Testis (tissue), 5 donors: ENCODE measurements at regions of chr13 and their contacts with region 1.

Region 1: GRCh38 chr13:78121459-78122348 is 203.1 kb upstream of the EDNRB start:
- DNase-seq: peak; percentile 56
- H3K4me3 ChIP-seq: no peak overlapping the region
- H3K27ac ChIP-seq: no peak overlapping the region
- H3K4me1 ChIP-seq: no peaks in the 10 kb centered on the region
- H3K27me3 ChIP-seq: no peaks in the 10 kb centered on the region
- CTCF ChIP-seq: peak; percentile 84 to 96 (median 94)
- POLR2A ChIP-seq: no peak

Region 2: GRCh38 chr13:77779552-77780272 is 342.0 kb before region 1 on chr13:
- intact Hi-C with region 1: loop called (anchors 5 kb)
- DNase-seq: peak; percentile 67
- H3K4me3 ChIP-seq: no peak overlapping the region
- H3K27ac ChIP-seq: no peak overlapping the region
- H3K4me1 ChIP-seq: no peaks in the 10 kb centered on the region
- H3K27me3 ChIP-seq: no peaks in the 10 kb centered on the region
- CTCF ChIP-seq: peak; percentile 52 to 60 (median 53)
- POLR2A ChIP-seq: no peak